ENCODE measurements at regions of chr16 and their contacts with region 1.

Region 1: GRCh38 chr16:54286090-54286993 is at the start of gene IRX3:
- DNase-seq: peak; percentile 90 to 95
- H3K4me3 ChIP-seq: peak within 1 kb of the TSS; percentile 83
- H3K4me3 Mint-ChIP-seq: peak within 1 kb of the TSS; percentile 85
- H3K27ac Mint-ChIP-seq: peak within 1 kb of the TSS; percentile 79
- H3K4me1 ChIP-seq: 0 out of 2 replicates have a peak, but pooled peaks cover 5% of the 10 kb centered on the region
- H3K4me1 Mint-ChIP-seq: peaks cover 7% of the 10 kb centered on the region
- H3K27me3 ChIP-seq: no peaks in the 10 kb centered on the region
- H3K27me3 Mint-ChIP-seq: no peaks in the 10 kb centered on the region
- CTCF ChIP-seq: no peak
- total RNA-seq, gene IRX3: 63.2 and 73.3 TPM in 2 replicates

Region 2: DNA sequence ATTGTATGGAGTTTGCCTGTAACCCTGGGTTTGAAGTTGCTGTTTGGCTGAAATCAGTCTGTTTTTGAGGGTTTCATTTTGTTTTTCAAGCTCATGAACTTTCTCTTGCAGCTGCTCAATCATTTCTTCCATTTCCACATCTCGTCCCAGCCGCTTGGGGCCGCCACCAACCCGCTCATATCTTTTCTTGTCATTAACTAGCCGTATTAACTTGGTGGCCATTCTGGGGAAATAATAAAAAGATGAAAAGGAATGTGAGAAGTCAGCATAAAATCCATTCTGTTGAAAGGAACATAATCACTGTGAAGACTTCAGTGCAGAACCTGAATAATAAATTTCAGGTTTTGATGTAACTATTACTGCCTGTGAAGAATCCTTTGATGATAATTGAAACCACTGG is 594.2 kb before region 1 on chr16:
- CTCF ChIA-PET with region 1: no interaction called
- POLR2A ChIA-PET with region 1: no interaction called
- intact Hi-C with region 1: loop called (anchors 10 kb)
- DNase-seq: peak; percentile 58 to 73
- H3K4me3 ChIP-seq: no peak overlapping the region
- H3K4me3 Mint-ChIP-seq: no peak overlapping the region
- H3K27ac Mint-ChIP-seq: no peak overlapping the region
- H3K4me1 ChIP-seq: peaks cover 3% of the 10 kb centered on the region; the same call in 1 of the 2 replicates
- H3K4me1 Mint-ChIP-seq: no peaks in the 10 kb centered on the region
- H3K27me3 ChIP-seq: no peaks in the 10 kb centered on the region
- H3K27me3 Mint-ChIP-seq: no peaks in the 10 kb centered on the region
- CTCF ChIP-seq: peak; percentile 74 to 75

Region 3: DNA sequence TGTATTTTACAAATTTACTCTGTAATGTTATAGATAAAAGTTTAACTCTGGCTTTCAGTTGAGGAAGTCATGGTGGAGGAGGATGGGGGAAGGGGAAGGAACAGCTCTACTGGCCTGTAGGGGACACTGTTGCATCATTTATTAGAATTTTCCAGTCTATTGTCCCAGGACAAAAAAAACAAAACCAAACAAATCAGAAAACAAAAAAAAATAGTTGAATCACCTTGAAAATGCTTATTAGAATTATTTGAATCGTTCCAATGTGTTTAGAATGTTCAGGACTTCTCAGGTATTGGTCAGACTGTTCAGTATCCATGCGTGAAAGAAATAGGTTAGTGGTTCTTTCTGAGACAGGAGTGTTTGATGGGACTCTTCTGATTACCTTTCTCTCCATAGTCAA is 340.3 kb before region 1 on chr16:
- CTCF ChIA-PET with region 1: no interaction called
- POLR2A ChIA-PET with region 1: interaction called, 7 read pairs
- intact Hi-C with region 1: loop called (anchors 5 kb)
- DNase-seq: peak in 1 of 2 experiments; percentile 65
- H3K4me3 ChIP-seq: no peak overlapping the region
- H3K4me3 Mint-ChIP-seq: no peak overlapping the region
- H3K27ac Mint-ChIP-seq: no peak overlapping the region
- H3K4me1 ChIP-seq: peaks cover 14% of the 10 kb centered on the region
- H3K4me1 Mint-ChIP-seq: peaks cover 7% of the 10 kb centered on the region
- H3K27me3 ChIP-seq: no peaks in the 10 kb centered on the region
- H3K27me3 Mint-ChIP-seq: no peaks in the 10 kb centered on the region
- CTCF ChIP-seq: peak; percentile 69 to 87

Region 4: DNA sequence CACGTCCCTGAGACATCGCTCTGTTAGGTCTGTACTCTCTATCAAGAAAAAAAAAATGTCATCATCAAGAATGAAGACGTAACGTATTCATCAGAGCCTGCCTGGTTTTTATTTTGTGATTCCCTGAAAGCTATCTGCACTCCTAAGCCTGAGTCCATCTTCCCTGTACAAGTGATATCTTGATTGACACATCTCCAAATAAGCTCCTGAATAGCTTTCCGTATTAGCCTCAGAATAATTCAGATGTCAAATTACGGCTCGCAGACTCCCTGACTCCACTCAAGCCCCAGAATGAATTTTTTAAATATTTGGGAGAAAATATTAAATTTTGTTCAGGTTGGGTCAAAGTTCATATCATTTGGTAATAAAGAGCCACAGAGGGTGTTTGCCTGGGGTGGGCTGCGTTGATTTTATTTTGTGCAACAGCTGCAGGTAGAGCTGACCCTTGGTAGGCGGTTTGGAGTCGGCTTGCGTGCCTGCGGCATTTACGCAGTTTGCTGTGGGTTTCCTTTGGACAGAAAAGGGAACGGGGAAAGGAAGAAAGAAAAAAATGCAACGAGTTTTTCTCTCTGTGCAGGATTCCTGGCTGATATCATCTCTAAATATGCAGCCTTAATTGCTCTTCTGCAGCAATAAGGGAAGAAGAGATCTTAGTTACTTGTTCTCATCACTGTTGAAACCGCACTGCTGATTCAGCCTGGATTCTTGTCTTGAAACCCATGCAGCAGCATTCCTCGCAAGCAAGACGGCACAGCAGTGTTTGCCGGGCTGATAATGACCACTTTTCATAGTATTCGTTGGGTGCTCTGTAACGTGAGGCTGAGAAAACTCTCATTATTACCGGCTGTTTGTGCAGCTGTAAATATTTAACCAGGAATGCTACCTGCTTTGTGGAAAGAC is 114.5 kb before region 1 on chr16:
- CTCF ChIA-PET with region 1: no interaction called
- POLR2A ChIA-PET with region 1: no interaction called
- intact Hi-C with region 1: loop called (anchors 2 kb)
- DNase-seq: peak; percentile 69 to 76
- H3K4me3 ChIP-seq: peak overlapping the region; percentile 22
- H3K4me3 Mint-ChIP-seq: peak overlapping the region; percentile 54
- H3K27ac Mint-ChIP-seq: no peak overlapping the region
- H3K4me1 ChIP-seq: peaks cover 48% of the 10 kb centered on the region
- H3K4me1 Mint-ChIP-seq: peaks cover 39% of the 10 kb centered on the region
- H3K27me3 ChIP-seq: no peaks in the 10 kb centered on the region
- H3K27me3 Mint-ChIP-seq: no peaks in the 10 kb centered on the region
- CTCF ChIP-seq: no peak

Region 5: GRCh38 chr16:54585094-54585997 is 299.0 kb after region 1 on chr16:
- CTCF ChIA-PET with region 1: interaction called, 10 read pairs
- POLR2A ChIA-PET with region 1: no interaction called
- intact Hi-C with region 1: no loop called
- DNase-seq: no peak
- H3K4me3 ChIP-seq: no peak overlapping the region
- H3K4me3 Mint-ChIP-seq: no peak overlapping the region
- H3K27ac Mint-ChIP-seq: no peak overlapping the region
- H3K4me1 ChIP-seq: peaks cover 18% of the 10 kb centered on the region
- H3K4me1 Mint-ChIP-seq: peaks cover 26% of the 10 kb centered on the region
- H3K27me3 ChIP-seq: no peaks in the 10 kb centered on the region
- H3K27me3 Mint-ChIP-seq: no peaks in the 10 kb centered on the region
- CTCF ChIP-seq: no peak

Region 6: DNA sequence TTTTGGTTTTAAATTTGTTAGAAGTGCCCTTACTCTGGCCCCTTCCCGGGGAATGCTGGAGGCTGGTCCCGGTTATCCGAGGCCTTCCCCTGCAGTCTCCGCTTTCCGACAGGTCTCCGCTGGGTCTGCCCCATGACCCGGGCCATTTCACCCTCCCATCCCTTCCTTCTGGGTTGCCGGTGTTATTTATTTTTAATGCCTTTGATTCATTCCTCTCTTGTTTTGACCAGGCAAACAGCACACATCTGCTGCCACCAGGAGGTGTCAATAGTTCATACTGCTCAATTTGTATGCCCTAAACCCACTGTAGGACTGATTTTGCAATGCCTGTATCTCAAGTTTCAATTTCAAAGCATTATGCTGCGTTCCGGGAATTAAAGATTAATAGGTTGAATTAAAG is 531.1 kb after region 1 on chr16:
- CTCF ChIA-PET with region 1: no interaction called
- POLR2A ChIA-PET with region 1: no interaction called
- intact Hi-C with region 1: loop called (anchors 10 kb)
- DNase-seq: peak in 1 of 2 experiments; percentile 35
- H3K4me3 ChIP-seq: no peak overlapping the region
- H3K4me3 Mint-ChIP-seq: no peak overlapping the region
- H3K27ac Mint-ChIP-seq: peak overlapping the region; percentile 82
- H3K4me1 ChIP-seq: peaks cover 20% of the 10 kb centered on the region
- H3K4me1 Mint-ChIP-seq: peaks cover 23% of the 10 kb centered on the region
- H3K27me3 ChIP-seq: no peaks in the 10 kb centered on the region
- H3K27me3 Mint-ChIP-seq: no peaks in the 10 kb centered on the region
- CTCF ChIP-seq: peak; percentile 38 to 72

Region 7: GRCh38 chr16:55257966-55258613 is 971.7 kb after region 1 on chr16:
- CTCF ChIA-PET with region 1: no interaction called
- POLR2A ChIA-PET with region 1: no interaction called
- intact Hi-C with region 1: loop called (anchors 10 kb)
- DNase-seq: peak; percentile 65 to 86
- H3K4me3 ChIP-seq: no peak overlapping the region
- H3K4me3 Mint-ChIP-seq: no peak overlapping the region
- H3K27ac Mint-ChIP-seq: no peak overlapping the region
- H3K4me1 ChIP-seq: no peaks in the 10 kb centered on the region
- H3K4me1 Mint-ChIP-seq: peaks cover 6% of the 10 kb centered on the region
- H3K27me3 ChIP-seq: no peaks in the 10 kb centered on the region
- H3K27me3 Mint-ChIP-seq: no peaks in the 10 kb centered on the region
- CTCF ChIP-seq: peak; percentile 86 to 93

Measured in Caco-2 (cell line).